AG04449 (cell line): ENCODE measurements at regions of chr21 and their contacts with region 1.

Region 1: GRCh38 chr21:34888569-34889319 is 160.4 kb downstream of the RUNX1 start:
- DNase-seq: peak; percentile 82
- H3K4me3 ChIP-seq: peak overlapping the region; percentile 83
- CTCF ChIP-seq: no peak

Region 2: GRCh38 chr21:34693192-34693810 is 195.4 kb before region 1 on chr21:
- CTCF ChIA-PET with region 1: interaction called, 12 read pairs
- POLR2A ChIA-PET with region 1: no interaction called
- DNase-seq: peak; percentile 23
- H3K4me3 ChIP-seq: no peak overlapping the region
- CTCF ChIP-seq: peak; percentile 74

Region 3: GRCh38 chr21:34865928-34866284 is 22.8 kb before region 1 on chr21:
- CTCF ChIA-PET with region 1: no interaction called
- POLR2A ChIA-PET with region 1: no interaction called
- DNase-seq: no peak
- H3K4me3 ChIP-seq: no peak overlapping the region
- CTCF ChIP-seq: no peak

Region 4: GRCh38 chr21:34983680-34984086 is 94.9 kb after region 1 on chr21:
- CTCF ChIA-PET with region 1: interaction called, 8 read pairs
- POLR2A ChIA-PET with region 1: interaction called, 14 read pairs
- DNase-seq: no peak
- H3K4me3 ChIP-seq: no peak overlapping the region
- CTCF ChIP-seq: no peak

Region 5: DNA sequence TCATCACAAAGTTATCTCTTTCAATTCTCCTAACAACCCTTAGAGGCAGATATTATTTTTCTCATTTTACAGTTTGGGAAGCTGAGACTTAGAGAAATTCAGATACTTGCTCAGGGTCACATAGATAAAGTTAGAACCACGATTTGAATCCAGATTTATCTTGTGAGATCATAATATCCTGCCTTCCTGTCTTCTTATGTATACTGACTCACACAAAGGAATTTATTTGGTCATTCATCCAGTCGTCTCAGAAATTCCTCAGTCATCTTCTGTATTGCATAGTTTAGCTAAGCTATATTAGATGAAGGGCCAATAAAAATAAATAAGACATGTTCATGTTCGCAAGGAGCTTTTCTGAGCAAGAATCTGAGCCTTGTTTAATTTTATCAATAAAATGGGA is 196.1 kb after region 1 on chr21:
- CTCF ChIA-PET with region 1: interaction called, 10 read pairs
- POLR2A ChIA-PET with region 1: interaction called, 7 read pairs
- DNase-seq: peak; percentile 90
- H3K4me3 ChIP-seq: no peak overlapping the region
- CTCF ChIP-seq: no peak

Region 6: GRCh38 chr21:35400233-35400957 is 511.7 kb after region 1 on chr21:
- CTCF ChIA-PET with region 1: interaction called, 21 read pairs
- POLR2A ChIA-PET with region 1: interaction called, 6 read pairs
- DNase-seq: no peak
- H3K4me3 ChIP-seq: no peak overlapping the region
- CTCF ChIP-seq: peak; percentile 38